B cell (primary cell): ENCODE measurements at regions of chr7 and their contacts with region 1.

Region 1: DNA sequence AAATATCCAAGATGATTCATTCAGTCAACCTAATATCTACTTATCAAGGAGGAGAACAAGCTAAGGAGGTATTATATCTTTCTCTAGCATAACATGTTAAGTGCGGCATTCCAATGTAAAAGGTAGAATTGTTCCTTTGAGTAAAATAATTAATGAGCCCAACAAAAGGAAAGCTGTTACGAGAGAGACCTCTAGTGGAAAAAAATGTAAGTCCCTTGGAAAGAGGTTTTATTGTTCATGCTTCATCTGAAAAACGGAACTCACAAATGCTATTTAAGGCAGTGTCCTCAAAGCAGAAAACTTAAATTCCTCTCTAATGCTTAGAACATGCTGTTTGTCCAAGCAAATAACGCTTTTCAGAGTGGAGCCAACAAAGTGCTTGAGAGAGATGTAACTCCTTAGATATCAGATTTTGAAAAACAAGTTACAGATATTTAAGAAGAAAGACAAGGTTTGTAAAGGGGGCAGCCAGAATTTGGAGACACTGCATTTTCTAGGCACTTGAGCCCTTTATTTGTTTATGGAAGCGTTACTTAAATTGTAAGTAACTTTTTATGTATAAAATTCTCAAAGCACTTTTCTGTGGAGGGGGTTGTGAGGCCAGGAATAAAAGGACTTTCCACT is 119.9 kb downstream of the TFEC start:
- DNase-seq: peak; percentile 36
- ATAC-seq: no peak
- H3K4me3 ChIP-seq: no peak overlapping the region
- H3K4me3 Mint-ChIP-seq: no peak overlapping the region
- H3K27ac ChIP-seq: no peak overlapping the region
- H3K27ac Mint-ChIP-seq: no peak overlapping the region
- H3K4me1 ChIP-seq: peaks cover 0 to 3% of the 10 kb centered on the region in 2 donors
- H3K4me1 Mint-ChIP-seq: no peaks in the 10 kb centered on the region
- H3K27me3 ChIP-seq: no peaks in the 10 kb centered on the region
- H3K27me3 Mint-ChIP-seq: peaks cover 11% of the 10 kb centered on the region
- CTCF ChIP-seq: peak; percentile 60

Region 2: DNA sequence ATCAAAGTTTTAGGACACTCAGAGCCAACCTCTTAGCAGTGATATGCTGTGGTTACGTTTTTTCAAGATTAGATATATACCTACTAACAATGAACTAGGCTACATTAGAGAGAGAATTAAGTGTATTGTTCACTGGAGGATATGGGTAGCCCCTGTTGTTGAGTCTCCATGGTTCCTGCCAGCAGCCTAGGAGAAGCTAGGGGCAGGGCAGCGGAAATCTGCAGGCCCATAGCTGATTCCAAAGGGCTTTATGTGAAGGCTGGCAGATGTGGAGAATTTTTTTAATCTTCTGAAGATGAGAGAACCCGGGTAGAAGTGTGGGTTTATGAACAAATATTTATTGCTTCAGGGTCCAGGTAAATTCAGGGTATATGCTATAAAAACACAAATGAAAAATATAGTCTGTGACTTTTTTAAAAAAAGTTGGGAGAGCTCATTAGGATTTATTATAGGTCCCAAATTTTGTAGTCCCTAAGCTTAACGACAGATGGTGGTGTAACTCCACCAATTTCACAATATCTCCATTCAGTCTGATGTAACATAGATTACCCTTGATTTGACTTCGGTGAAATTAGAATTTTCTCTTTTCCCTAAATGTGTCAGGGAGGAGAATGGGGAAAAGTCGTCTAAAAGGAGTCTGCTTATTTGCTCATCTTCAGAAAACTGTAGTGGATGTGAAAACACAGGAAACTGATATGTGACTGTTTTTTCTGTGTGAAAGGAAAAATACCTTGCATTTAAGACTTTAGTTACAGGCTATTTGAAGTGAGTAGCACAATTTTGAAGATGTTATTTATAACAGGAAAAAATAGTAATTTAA is 1828.8 kb before region 1 on chr7:
- CTCF ChIA-PET with region 1: no interaction called
- POLR2A ChIA-PET with region 1: no interaction called
- intact Hi-C with region 1: loop called (anchors 5 kb)
- DNase-seq: peak; percentile 58
- ATAC-seq: no peak
- H3K4me3 ChIP-seq: no peak overlapping the region
- H3K4me3 Mint-ChIP-seq: no peak overlapping the region
- H3K27ac ChIP-seq: no peak overlapping the region
- H3K27ac Mint-ChIP-seq: no peak overlapping the region
- H3K4me1 ChIP-seq: peaks cover 40 to 48% of the 10 kb centered on the region in 2 donors
- H3K4me1 Mint-ChIP-seq: peaks cover 39% of the 10 kb centered on the region
- H3K27me3 ChIP-seq: peaks cover 2 to 55% (median 53%) of the 10 kb centered on the region in 4 experiments
- H3K27me3 Mint-ChIP-seq: peaks cover 65% of the 10 kb centered on the region
- CTCF ChIP-seq: peak; percentile 22

Region 3: DNA sequence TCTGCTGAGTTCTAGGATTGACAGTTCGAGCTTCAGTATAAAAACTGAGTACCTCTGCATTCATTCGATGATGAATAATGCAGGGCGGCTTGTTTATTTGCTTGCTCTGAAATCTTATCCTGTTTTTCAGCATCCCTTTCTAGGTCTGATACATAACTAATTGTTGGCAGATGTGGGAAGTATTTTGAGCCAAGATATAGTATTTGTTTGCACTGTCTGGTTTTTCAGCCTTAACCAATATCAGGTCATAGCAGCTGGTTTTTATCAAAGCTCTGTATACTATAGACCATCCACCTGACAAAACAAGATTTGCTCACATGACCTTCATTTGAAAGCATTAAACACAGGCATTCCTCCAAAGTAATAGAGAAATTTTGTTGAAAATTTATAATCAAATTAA is 41.4 kb before region 1 on chr7:
- CTCF ChIA-PET with region 1: no interaction called
- POLR2A ChIA-PET with region 1: no interaction called
- intact Hi-C with region 1: no loop called
- DNase-seq: no peak
- ATAC-seq: no peak
- H3K4me3 ChIP-seq: no peak overlapping the region
- H3K4me3 Mint-ChIP-seq: no peak overlapping the region
- H3K27ac ChIP-seq: no peak overlapping the region
- H3K27ac Mint-ChIP-seq: no peak overlapping the region
- H3K4me1 ChIP-seq: no peaks in the 10 kb centered on the region
- H3K4me1 Mint-ChIP-seq: no peaks in the 10 kb centered on the region
- H3K27me3 ChIP-seq: peaks cover 0 to 2% (median 0%) of the 10 kb centered on the region in 4 experiments
- H3K27me3 Mint-ChIP-seq: peaks cover 3% of the 10 kb centered on the region
- CTCF ChIP-seq: no peak

Region 4: DNA sequence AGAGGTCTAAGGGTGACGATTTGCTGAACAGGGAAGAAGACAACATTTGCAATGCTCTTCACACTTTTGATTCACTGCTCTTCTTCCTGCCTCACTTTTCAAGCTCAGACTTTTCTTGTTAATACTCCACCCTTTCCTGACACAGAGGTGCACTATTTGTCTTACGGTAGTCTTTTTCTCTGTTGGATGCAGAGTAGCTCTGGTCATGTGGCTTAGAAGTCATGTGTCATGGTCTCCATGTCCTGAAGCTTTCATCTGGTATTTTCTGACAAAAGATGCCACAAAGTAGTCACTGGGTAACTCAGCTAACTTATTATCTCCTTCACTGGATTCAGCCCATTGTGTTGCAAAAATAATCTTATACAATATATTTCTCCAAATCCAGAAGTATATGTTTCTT is 29.2 kb before region 1 on chr7:
- CTCF ChIA-PET with region 1: no interaction called
- POLR2A ChIA-PET with region 1: no interaction called
- intact Hi-C with region 1: no loop called
- DNase-seq: no peak
- ATAC-seq: no peak
- H3K4me3 ChIP-seq: no peak overlapping the region
- H3K4me3 Mint-ChIP-seq: no peak overlapping the region
- H3K27ac ChIP-seq: no peak overlapping the region
- H3K27ac Mint-ChIP-seq: no peak overlapping the region
- H3K4me1 ChIP-seq: no peaks in the 10 kb centered on the region
- H3K4me1 Mint-ChIP-seq: no peaks in the 10 kb centered on the region
- H3K27me3 ChIP-seq: no peaks in the 10 kb centered on the region
- H3K27me3 Mint-ChIP-seq: no peaks in the 10 kb centered on the region
- CTCF ChIP-seq: no peak

Region 5: GRCh38 chr7:116598278-116598677 is 687.6 kb after region 1 on chr7:
- CTCF ChIA-PET with region 1: no interaction called
- POLR2A ChIA-PET with region 1: no interaction called
- intact Hi-C with region 1: no loop called
- DNase-seq: no peak
- ATAC-seq: no peak
- H3K4me3 ChIP-seq: no peak overlapping the region
- H3K4me3 Mint-ChIP-seq: no peak overlapping the region
- H3K27ac ChIP-seq: no peak overlapping the region
- H3K27ac Mint-ChIP-seq: no peak overlapping the region
- H3K4me1 ChIP-seq: no peaks in the 10 kb centered on the region
- H3K4me1 Mint-ChIP-seq: peaks cover under 1% of the 10 kb centered on the region
- H3K27me3 ChIP-seq: peaks cover 0 to 11% (median 4%) of the 10 kb centered on the region in 4 experiments
- H3K27me3 Mint-ChIP-seq: peaks cover 21% of the 10 kb centered on the region
- CTCF ChIP-seq: no peak